ENCODE measurements at regions of chr4 and their contacts with region 1.

Region 1: GRCh38 chr4:38730830-38731646 is 51.8 kb downstream of the TLR10 start:
- DNase-seq: peak; percentile 88
- H3K4me3 ChIP-seq: no peak overlapping the region
- H3K27ac ChIP-seq: no peak overlapping the region
- H3K27me3 ChIP-seq: peaks cover 8% of the 10 kb centered on the region
- CTCF ChIP-seq: peak; percentile 95

Region 2: GRCh38 chr4:38069271-38069760 is 661.7 kb before region 1 on chr4:
- CTCF ChIA-PET with region 1: interaction called, 10 read pairs
- POLR2A ChIA-PET with region 1: no interaction called
- DNase-seq: peak; percentile 30
- H3K4me3 ChIP-seq: no peak overlapping the region
- H3K27ac ChIP-seq: no peak overlapping the region
- H3K27me3 ChIP-seq: no peaks in the 10 kb centered on the region
- CTCF ChIP-seq: peak; percentile 65

Region 3: DNA sequence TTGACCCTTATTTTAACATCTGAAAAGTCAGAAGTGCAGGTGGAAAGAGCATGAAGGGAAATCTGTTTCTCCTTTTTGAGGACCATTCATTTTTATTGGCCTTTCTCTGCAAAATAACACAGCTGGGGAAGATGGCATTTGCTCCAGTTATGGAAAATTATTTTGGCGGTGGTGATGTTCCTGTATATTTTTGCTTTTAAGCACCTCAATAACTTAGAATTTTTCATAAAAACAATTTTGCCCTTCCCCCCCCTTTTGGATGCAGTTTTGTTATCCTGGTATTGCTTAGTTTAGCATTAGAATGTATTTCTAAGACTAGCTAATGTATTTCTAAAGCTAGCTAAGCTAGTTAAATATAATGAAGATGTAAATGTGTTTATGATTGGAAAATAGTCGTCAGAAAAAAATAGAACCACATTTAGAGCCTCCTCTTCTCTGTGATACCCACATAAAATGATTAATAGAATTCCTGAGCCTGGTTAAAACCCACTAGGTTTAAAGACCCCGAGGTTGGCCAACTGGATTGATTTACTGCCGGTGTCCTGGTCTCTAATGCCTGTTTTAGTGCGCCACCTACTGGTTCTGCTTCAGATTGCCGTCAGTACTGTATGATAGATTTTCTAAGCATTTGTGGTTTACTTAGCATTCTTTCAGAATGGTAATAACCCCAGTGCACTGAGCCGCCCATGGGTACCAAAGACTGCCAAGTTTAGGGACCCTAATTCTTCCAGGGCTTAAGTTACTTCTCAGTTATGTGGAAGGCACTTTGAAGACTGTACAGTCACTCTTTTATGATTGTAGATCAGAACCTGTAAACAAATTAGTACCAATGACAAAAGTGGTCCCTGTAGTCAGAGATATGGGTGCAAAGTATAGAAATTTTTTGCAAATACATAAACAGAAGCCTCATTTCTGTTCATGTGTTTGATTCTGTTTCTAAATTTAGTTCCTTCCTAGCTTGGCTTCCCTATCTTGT is 55.6 kb before region 1 on chr4:
- CTCF ChIA-PET with region 1: interaction called, 12 read pairs
- POLR2A ChIA-PET with region 1: no interaction called
- DNase-seq: peak; percentile 72
- H3K4me3 ChIP-seq: no peak overlapping the region
- H3K27ac ChIP-seq: peak overlapping the region; percentile 39
- H3K27me3 ChIP-seq: no peaks in the 10 kb centered on the region
- CTCF ChIP-seq: peak; percentile 91

Region 4: GRCh38 chr4:38743866-38744265 is 12.8 kb after region 1 on chr4:
- CTCF ChIA-PET with region 1: interaction called, 11 read pairs
- POLR2A ChIA-PET with region 1: no interaction called
- DNase-seq: no peak
- H3K4me3 ChIP-seq: no peak overlapping the region
- H3K27ac ChIP-seq: no peak overlapping the region
- H3K27me3 ChIP-seq: peaks cover 5% of the 10 kb centered on the region
- CTCF ChIP-seq: no peak

Region 5: GRCh38 chr4:38804654-38805295 is 73.7 kb after region 1 on chr4 and contains the start of gene TLR1:
- CTCF ChIA-PET with region 1: no interaction called
- POLR2A ChIA-PET with region 1: no interaction called
- DNase-seq: no peak
- H3K4me3 ChIP-seq: no peak within 1 kb of the TSS
- H3K27ac ChIP-seq: no peak within 1 kb of the TSS
- H3K27me3 ChIP-seq: no peaks in the 10 kb centered on the region
- CTCF ChIP-seq: peak; percentile 61
- polyA plus RNA-seq, gene TLR1: 0.88 and 0.93 TPM in 2 replicates

Region 6: DNA sequence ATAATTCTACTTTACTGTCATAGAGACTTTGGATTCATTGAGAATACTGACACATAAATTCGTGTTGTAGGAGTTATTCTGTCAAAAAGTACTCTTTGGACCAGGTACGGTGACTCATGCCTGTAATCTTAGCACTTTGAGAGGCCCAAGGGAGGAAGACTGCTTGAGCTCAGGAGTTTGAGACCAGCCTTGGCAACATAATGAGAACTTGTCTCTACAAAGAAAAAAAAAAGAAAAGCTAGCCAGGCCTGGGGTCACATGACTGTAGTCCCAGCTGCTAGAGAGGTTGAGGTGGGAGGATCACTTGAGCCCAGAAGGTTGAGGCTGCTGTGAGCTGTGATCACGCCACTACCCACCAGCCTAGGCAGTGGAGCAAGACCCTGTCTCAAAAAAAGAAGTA is 506.1 kb after region 1 on chr4:
- CTCF ChIA-PET with region 1: no interaction called
- POLR2A ChIA-PET with region 1: no interaction called
- DNase-seq: no peak
- H3K4me3 ChIP-seq: no peak overlapping the region
- H3K27ac ChIP-seq: no peak overlapping the region
- H3K27me3 ChIP-seq: no peaks in the 10 kb centered on the region
- CTCF ChIP-seq: no peak